AG04449 (cell line): ENCODE measurements at regions of chr5 and their contacts with region 1.

Region 1: DNA sequence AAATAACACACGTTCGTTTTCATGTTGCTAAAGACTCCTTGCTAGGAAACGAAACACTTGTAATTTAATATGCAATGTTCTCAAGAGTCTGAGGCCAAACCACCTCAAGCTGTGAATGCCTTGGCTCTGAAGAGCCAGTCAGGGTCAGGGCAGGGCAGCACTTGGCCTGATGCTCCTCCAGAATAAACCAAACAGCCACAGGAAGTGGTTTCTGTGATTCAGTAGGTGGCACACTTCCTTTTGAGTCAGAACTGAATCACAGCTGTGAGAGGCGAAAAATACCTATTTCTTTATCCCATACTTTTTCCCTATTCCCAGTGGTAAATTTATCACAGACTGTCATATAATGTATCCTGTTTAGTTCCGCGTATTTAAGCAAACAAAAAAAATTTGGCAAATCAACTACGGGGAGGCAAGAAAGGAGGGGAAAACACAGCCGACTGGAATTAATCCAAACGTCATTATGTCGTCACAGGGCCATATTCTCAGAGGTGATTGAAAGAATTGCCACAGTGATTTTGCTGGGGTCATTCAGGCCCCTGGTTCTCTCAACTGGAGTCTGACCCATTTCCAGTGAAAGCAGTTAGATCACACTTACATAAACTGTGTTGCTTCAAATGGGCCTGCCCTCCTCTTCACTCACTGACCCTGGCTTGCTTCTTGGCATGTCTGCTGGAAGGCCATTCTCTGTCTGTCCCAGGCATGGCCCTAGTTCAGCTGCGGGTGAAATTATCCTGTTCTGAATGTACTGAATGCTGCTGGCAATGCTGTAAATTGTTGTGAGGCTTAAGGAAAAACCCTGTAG is 71.2 kb downstream of the ARRDC3 start:
- DNase-seq: peak; percentile 97
- H3K4me3 ChIP-seq: no peak overlapping the region
- CTCF ChIP-seq: no peak

Region 2: DNA sequence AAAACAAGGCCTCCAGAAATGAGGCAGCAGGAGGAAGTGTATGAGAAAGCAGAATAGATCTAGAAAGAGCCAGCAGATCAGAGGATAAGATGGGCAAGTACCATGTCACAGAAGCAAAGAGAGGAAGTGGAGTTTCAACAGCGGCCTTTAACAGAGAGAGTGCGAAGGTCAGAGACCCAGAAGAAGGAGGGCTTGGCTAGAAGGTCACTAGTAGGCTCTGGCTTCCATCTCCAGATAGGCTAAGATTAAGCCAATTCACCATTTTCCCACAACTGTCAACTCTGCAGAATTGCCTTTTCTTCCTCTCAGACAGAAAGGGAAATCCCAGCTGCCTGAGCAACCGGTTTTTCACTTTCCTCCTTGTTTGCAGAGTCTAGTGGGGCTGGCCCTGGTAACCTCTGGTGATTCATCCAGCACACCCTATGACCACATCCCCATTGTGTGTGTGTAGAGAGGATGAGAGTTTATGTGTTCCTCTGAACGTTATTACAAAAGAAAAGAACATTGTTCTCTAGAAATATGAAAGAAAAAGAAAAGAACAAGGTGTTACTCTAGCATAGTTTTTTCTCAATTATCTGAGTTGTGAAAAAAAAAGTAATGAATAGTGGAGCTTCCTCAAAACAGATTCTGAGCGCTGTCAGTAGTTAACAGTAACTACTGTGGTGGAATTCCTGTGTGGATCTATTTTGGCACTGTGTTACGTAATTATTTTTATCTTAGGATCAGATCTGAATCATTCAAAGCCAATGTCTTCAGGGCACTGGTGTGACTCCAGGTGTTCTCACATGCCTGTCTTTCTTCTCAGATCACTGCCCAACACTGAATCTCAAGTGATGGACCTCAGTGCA is 149.1 kb before region 1 on chr5:
- CTCF ChIA-PET with region 1: no interaction called
- POLR2A ChIA-PET with region 1: no interaction called
- DNase-seq: peak; percentile 57
- H3K4me3 ChIP-seq: no peak overlapping the region
- CTCF ChIP-seq: no peak

Region 3: GRCh38 chr5:91301106-91301846 is 10.6 kb before region 1 on chr5:
- CTCF ChIA-PET with region 1: interaction called, 17 read pairs
- POLR2A ChIA-PET with region 1: no interaction called
- DNase-seq: no peak
- H3K4me3 ChIP-seq: no peak overlapping the region
- CTCF ChIP-seq: no peak